BJ (cell line): ENCODE measurements at regions of chr16 and their contacts with region 1.

Region 1: DNA sequence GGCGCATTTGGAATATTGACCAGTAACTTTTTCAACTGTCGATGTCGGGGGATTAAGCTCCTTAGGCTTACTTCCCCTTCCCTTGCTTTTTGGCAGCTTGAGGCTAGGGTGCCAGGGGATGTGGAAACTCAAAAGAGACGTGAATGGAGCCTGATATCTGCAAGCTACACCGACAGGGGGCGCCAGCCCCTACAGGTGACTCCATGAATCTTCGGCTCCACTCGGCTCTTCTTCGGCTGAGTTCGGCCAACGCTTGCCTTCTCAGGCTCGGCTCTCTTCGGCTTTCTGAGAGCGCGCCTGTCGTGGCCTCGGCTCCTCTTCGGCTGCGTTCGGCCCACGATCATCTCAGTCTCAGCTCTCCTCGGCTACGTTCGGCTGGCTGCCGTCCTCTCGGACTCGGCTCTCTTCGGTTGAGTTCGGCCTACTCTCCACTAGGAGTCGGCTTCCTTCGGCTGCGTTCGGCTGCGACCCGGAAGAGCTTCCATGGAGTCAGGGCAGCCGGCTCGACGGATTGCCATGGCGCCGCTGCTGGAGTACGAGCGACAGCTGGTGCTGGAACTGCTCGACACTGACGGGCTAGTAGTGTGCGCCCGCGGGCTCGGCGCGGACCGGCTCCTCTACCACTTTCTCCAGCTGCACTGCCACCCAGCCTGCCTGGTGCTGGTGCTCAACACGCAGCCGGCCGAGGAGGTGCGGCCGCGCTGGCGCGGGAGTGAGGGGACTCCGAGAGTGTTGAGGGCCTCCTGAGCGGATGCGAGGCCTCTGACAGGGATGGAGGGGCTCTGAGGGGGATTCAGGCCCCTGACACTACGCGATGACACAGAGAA is at the start of gene ERCC4:
- DNase-seq: peak; percentile 96
- H3K4me3 ChIP-seq: peak within 1 kb of the TSS; percentile 83
- H3K27me3 ChIP-seq: no peaks in the 10 kb centered on the region; the same call in 1 of the 2 replicates
- CTCF ChIP-seq: peak; percentile 95
- polyA plus RNA-seq, gene ERCC4: 4.9 and 6.6 TPM in 2 replicates

Region 2: DNA sequence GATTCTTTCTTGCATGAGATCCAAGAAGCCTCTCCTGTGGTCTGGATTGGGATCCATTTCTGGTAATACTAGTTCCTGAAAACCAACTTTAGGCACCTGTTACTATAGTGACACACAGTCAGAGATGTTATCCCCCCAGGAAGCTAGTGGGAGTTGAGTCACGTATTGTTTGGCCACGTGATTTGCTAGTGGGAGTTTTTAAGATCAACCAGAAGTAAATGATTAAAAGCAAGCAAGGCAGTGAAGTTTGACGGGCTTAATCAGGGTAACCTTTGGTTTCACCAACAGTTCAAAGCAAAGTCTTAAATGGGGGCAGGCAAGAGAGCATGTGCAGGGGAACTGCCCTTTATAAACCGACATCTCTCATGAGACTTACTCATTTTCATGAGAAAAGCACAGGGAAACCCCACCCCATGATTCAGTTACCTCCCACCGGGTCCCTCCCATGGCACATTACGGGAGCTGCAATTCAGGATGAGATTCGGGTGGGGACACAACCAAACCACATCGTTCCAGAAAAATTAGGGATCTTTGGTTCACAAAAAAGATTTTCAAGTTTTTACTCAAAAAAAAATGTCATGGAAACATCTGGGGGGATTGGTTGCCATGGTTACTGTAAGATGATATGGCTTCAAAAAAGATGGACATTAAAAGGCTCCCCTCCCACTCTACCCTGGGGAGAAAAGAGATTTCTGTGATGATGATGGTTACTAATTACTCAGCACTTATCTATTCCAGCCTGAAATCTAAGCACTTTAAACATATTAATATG is 483.1 kb before region 1 on chr16:
- CTCF ChIA-PET with region 1: no interaction called
- POLR2A ChIA-PET with region 1: no interaction called
- DNase-seq: no peak
- H3K4me3 ChIP-seq: no peak overlapping the region
- H3K27me3 ChIP-seq: no peaks in the 10 kb centered on the region
- CTCF ChIP-seq: no peak

Region 3: GRCh38 chr16:13645591-13646245 is 274.2 kb before region 1 on chr16:
- CTCF ChIA-PET with region 1: no interaction called
- POLR2A ChIA-PET with region 1: no interaction called
- DNase-seq: no peak
- H3K4me3 ChIP-seq: no peak overlapping the region
- H3K27me3 ChIP-seq: no peaks in the 10 kb centered on the region
- CTCF ChIP-seq: no peak

Region 4: DNA sequence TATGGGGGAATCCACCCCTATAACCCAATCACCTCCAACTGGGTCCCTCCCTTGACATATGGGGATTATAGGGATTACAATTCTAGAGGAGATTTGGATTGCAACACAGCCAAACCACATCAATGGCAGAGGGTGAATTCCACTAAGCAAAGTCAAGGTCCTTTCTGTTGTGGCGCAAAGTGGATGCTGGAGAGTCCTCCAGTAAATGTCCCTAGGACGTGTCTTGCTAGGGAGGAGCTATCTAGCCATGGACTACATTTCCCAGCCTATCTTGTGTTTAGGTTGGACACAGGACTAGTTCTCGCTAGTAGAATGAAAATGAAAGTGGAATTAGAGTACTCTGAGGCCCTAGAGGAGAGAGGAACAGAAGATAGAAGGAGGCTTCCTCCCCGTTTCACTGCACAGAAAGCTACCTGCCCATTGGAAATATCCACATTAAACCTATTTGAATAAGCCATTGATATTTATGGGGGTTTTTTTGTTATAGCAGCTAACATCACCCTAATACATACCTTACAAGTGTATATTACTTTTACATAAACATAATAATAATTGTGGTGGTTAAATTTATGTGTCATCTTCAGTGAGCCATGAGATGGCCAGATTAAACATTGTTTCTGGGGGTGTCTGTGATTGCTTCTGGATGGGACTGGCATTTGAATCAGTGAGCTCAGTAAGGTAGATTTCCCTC is 56.7 kb before region 1 on chr16:
- CTCF ChIA-PET with region 1: interaction called, 11 read pairs
- POLR2A ChIA-PET with region 1: no interaction called
- DNase-seq: no peak
- H3K4me3 ChIP-seq: no peak overlapping the region
- H3K27me3 ChIP-seq: no peaks in the 10 kb centered on the region
- CTCF ChIP-seq: no peak

Region 5: DNA sequence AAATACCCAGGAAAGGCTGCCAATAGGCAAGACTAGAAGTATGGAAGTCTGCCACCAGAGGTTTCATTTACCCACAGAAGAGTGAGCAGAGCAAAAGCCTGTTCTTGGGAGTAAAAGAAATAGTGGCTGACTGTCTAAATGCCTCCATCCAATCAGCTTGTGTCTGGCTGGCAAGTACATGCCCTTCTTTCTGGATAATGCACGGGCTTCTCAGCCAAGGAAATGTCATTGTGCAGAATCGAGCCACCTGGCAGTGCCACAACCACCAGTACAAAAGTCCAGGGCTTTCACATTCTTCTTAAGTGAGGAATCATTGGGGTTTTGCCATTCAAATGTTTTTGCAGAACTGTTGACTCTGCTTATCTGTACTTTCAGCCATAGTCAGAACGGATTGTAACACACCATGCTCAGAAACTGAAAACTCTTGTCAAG is 10.0 kb before region 1 on chr16:
- CTCF ChIA-PET with region 1: interaction called, 28 read pairs
- POLR2A ChIA-PET with region 1: no interaction called
- DNase-seq: no peak
- H3K4me3 ChIP-seq: no peak overlapping the region
- H3K27me3 ChIP-seq: peaks cover 6% of the 10 kb centered on the region
- CTCF ChIP-seq: no peak

Region 6: GRCh38 chr16:13935408-13935807 is 15.5 kb after region 1 on chr16:
- CTCF ChIA-PET with region 1: interaction called, 10 read pairs
- POLR2A ChIA-PET with region 1: no interaction called
- DNase-seq: no peak
- H3K4me3 ChIP-seq: no peak overlapping the region
- H3K27me3 ChIP-seq: no peaks in the 10 kb centered on the region
- CTCF ChIP-seq: peak; percentile 51

Region 7: DNA sequence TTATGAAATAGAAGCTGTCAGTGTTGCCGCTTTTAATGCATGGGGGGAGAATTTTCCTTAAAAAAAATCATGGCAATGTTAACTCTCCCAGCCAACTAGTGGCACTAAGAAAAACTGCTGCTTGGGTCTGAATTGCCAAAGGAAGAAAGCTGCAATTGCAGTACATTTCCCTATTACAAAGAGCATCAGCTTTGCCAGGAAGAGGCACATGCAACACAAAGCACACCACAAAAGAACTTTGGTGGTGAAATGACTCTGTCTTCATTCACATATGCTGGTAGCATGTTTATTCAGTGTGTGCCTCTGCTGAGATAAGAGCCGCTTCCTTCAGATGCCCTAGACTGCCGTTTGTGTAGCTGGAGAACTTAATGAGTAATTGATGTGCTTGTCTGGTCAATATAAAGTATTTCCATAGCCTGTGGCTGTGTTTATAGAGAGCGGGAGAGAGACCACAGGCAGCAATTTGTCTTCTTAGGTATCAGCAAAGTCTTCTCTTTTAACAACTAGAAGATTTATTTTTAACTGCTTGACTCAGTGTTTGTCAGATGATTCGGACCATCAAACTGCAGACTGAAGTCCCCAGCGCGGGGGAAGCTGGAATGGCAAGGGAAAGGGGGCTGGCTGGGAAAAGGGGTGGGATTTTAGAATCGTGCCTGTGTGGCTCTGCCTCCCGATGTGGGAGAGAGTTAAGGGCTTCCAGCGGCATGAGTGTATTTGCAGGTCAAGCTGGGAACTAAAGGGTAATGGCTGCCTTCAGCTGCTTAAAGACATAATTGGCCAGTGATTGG is 266.3 kb after region 1 on chr16:
- CTCF ChIA-PET with region 1: interaction called, 12 read pairs
- POLR2A ChIA-PET with region 1: no interaction called
- DNase-seq: no peak
- H3K4me3 ChIP-seq: peak overlapping the region; percentile 16
- H3K27me3 ChIP-seq: no peaks in the 10 kb centered on the region
- CTCF ChIP-seq: peak; percentile 66

Region 8: GRCh38 chr16:14285513-14286385 is 365.9 kb after region 1 on chr16:
- CTCF ChIA-PET with region 1: interaction called, 16 read pairs
- POLR2A ChIA-PET with region 1: no interaction called
- DNase-seq: no peak
- H3K4me3 ChIP-seq: peak overlapping the region; percentile 90
- H3K27me3 ChIP-seq: no peaks in the 10 kb centered on the region
- CTCF ChIP-seq: no peak